Caco-2 (cell line): ENCODE measurements at regions of chr12 and their contacts with region 1.

Region 1: DNA sequence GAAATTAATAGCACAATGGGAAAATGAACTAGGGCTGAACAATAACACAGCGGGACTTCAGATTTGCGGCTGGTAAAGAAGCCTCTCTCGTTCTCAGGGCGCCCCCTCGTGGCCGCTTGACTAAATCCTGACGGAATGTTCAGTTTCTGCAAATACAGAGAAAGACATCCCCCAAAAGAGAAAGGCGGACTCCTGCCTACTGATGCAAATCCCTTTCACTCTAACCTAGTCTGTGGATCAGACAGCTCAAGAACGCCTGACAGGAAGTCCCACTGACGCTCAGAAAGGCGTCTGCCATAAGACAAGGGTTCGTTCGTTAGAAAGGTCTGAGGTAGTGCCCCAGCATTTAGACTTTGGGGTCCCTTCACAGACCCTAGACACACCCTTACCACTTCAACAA is 2.5 kb downstream of the NUAK1 start:
- DNase-seq: peak; percentile 77 to 85
- H3K4me3 ChIP-seq: no peak overlapping the region
- H3K4me3 Mint-ChIP-seq: peak overlapping the region; percentile 56
- H3K27ac Mint-ChIP-seq: no peak overlapping the region
- H3K4me1 ChIP-seq: peaks cover 42% of the 10 kb centered on the region
- H3K4me1 Mint-ChIP-seq: peaks cover 64% of the 10 kb centered on the region
- H3K27me3 ChIP-seq: no peaks in the 10 kb centered on the region; the same call in 1 of the 2 replicates
- H3K27me3 Mint-ChIP-seq: peaks cover 2% of the 10 kb centered on the region
- CTCF ChIP-seq: peak; percentile 78 to 85

Region 2: DNA sequence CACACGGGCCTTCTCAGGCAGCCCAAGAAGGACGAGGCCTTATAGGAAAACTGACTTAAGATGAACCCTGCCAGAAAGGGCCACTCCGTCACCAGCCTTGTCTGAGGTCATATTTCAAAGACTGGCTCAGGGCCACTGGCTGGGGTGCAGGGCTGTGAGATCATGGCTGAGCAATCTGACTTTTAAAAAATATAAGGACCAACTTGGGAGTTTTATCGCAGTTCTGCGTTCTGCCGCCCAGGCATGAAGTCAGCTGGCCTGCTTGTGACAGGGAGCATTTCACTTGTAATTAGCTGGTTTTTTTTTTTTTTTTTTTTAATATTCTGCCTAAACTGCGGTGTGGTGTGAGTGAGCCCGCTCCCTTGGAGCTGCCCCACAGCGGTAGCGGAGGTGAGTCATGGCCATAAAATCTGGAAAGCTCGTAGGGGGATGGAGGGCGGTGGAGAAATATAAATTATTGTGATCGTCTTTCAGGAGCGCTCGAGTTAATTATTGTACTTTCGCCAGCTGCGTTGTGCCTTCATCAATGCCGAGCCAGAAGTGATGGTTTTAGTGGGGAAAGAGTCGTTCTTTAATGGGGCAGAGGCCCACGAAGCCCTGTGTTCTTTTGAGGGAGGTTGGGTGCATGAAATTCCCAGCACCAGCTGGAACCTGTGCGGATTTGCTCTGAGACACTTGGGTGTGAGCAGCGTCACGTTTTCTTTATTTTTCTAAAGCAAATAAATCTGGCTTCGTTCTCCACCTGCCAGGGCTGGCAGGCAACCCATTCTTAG is 573.9 kb before region 1 on chr12:
- CTCF ChIA-PET with region 1: no interaction called
- POLR2A ChIA-PET with region 1: no interaction called
- intact Hi-C with region 1: loop called (anchors 1 kb)
- DNase-seq: peak; percentile 19 to 42
- H3K4me3 ChIP-seq: peak overlapping the region; percentile 24
- H3K4me3 Mint-ChIP-seq: peak overlapping the region; percentile 70
- H3K27ac Mint-ChIP-seq: peak overlapping the region; percentile 75
- H3K4me1 ChIP-seq: 0 out of 2 replicates have a peak, but pooled peaks cover 3% of the 10 kb centered on the region
- H3K4me1 Mint-ChIP-seq: peaks cover 10% of the 10 kb centered on the region
- H3K27me3 ChIP-seq: no peaks in the 10 kb centered on the region
- H3K27me3 Mint-ChIP-seq: no peaks in the 10 kb centered on the region
- CTCF ChIP-seq: no peak

Region 3: GRCh38 chr12:105713606-105714305 is 422.5 kb before region 1 on chr12:
- CTCF ChIA-PET with region 1: no interaction called
- POLR2A ChIA-PET with region 1: no interaction called
- intact Hi-C with region 1: no loop called
- DNase-seq: no peak
- H3K4me3 ChIP-seq: no peak overlapping the region
- H3K4me3 Mint-ChIP-seq: no peak overlapping the region
- H3K27ac Mint-ChIP-seq: no peak overlapping the region
- H3K4me1 ChIP-seq: no peaks in the 10 kb centered on the region
- H3K4me1 Mint-ChIP-seq: no peaks in the 10 kb centered on the region
- H3K27me3 ChIP-seq: no peaks in the 10 kb centered on the region
- H3K27me3 Mint-ChIP-seq: peaks cover 2% of the 10 kb centered on the region
- CTCF ChIP-seq: no peak

Region 4: DNA sequence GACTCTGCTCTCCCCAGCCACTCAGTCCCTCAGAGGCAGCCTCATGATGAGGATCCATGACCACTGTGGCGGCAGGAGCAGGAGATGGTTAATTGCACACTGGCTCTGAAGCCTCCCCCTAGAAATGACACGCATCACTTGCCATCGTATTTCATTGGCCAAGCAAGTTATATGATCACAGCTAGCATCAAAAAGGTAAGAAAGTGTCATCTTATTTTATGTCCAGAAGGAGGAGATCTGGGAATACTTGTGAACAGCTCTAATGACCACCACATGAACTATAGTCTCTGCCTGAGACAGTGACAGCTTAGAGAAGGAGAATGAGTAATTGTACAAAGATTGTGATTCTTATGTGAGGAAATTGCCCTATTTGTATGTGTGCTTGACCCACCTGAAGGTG is 360.9 kb before region 1 on chr12:
- CTCF ChIA-PET with region 1: interaction called, 3 read pairs
- POLR2A ChIA-PET with region 1: no interaction called
- intact Hi-C with region 1: loop called (anchors 2 kb)
- DNase-seq: no peak
- H3K4me3 ChIP-seq: no peak overlapping the region
- H3K4me3 Mint-ChIP-seq: no peak overlapping the region
- H3K27ac Mint-ChIP-seq: no peak overlapping the region
- H3K4me1 ChIP-seq: no peaks in the 10 kb centered on the region
- H3K4me1 Mint-ChIP-seq: no peaks in the 10 kb centered on the region
- H3K27me3 ChIP-seq: no peaks in the 10 kb centered on the region
- H3K27me3 Mint-ChIP-seq: no peaks in the 10 kb centered on the region
- CTCF ChIP-seq: no peak

Region 5: DNA sequence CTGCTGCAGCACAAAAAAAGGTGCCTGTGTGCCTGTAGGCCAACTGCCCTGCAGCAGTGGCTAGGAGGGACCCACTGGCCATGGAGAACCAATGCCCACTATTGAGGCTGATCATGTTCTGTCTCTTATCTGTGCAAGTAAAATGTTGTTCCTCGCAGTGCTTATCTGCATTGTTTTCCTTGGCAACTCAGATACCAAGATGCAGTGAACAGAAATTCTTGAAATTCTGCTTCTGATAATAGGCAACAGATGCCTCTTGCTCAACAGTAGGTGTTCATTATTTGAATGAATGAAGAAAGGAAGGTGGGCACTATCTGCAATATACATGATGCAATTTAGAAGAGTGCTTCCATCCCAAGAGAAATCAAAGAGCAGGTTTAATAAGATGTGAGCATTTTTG is 229.7 kb before region 1 on chr12:
- CTCF ChIA-PET with region 1: interaction called, 12 read pairs
- POLR2A ChIA-PET with region 1: no interaction called
- intact Hi-C with region 1: no loop called
- DNase-seq: peak in 1 of 2 experiments; percentile 38
- H3K4me3 ChIP-seq: no peak overlapping the region
- H3K4me3 Mint-ChIP-seq: no peak overlapping the region
- H3K27ac Mint-ChIP-seq: peak overlapping the region; percentile 2
- H3K4me1 ChIP-seq: peaks cover 14% of the 10 kb centered on the region
- H3K4me1 Mint-ChIP-seq: peaks cover 15% of the 10 kb centered on the region
- H3K27me3 ChIP-seq: no peaks in the 10 kb centered on the region
- H3K27me3 Mint-ChIP-seq: no peaks in the 10 kb centered on the region
- CTCF ChIP-seq: no peak

Region 6: DNA sequence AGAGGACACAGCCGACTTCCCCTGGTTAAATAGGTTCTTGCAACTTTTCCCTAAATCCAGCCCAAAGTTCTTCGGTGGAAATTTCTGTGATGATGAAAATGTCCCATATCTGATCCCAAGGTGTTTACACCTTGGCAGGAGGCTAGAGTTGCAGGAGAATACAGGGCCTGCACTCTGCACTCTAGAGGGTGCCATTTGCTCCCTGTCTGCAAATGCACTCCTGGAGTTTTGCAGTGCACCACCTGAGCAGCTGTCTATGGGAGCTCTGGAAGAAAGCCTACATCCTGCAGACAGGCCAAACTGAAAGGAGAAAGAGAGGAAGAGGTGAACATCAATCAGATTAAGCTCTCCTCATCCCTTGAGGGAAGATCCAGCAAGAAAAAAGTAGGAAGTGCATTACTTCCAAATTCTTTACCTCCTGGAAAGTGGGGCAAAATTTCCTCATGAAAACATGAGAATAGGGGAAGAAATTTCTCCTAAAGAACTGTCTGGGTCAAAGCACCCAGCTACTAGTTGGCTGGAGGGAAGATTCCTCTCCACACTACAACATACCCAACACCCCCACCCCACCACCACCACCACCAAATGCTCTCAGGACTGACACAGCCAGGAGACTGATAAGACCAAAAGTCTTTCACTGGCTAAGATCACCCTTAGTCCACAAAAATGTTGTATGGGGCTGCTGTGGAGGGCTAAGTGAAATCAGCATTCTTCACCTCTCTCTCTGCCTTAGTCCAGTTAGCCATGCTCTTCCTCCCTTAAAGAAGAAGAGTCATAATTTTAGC is 103.9 kb before region 1 on chr12:
- CTCF ChIA-PET with region 1: interaction called, 4 read pairs
- POLR2A ChIA-PET with region 1: no interaction called
- intact Hi-C with region 1: loop called (anchors 1 kb)
- DNase-seq: peak; percentile 23 to 49
- H3K4me3 ChIP-seq: no peak overlapping the region
- H3K4me3 Mint-ChIP-seq: no peak overlapping the region
- H3K27ac Mint-ChIP-seq: no peak overlapping the region
- H3K4me1 ChIP-seq: peaks cover 28% of the 10 kb centered on the region
- H3K4me1 Mint-ChIP-seq: peaks cover 25% of the 10 kb centered on the region
- H3K27me3 ChIP-seq: no peaks in the 10 kb centered on the region
- H3K27me3 Mint-ChIP-seq: no peaks in the 10 kb centered on the region
- CTCF ChIP-seq: peak in 1 of 2 experiments; percentile 50

Region 7: GRCh38 chr12:106108185-106108835 is 28.0 kb before region 1 on chr12:
- CTCF ChIA-PET with region 1: interaction called, 3 read pairs
- POLR2A ChIA-PET with region 1: interaction called, 3 read pairs
- intact Hi-C with region 1: loop called (anchors 2 kb)
- DNase-seq: no peak
- H3K4me3 ChIP-seq: no peak overlapping the region
- H3K4me3 Mint-ChIP-seq: no peak overlapping the region
- H3K27ac Mint-ChIP-seq: peak overlapping the region; percentile 51
- H3K4me1 ChIP-seq: peaks cover 49% of the 10 kb centered on the region
- H3K4me1 Mint-ChIP-seq: peaks cover 33% of the 10 kb centered on the region
- H3K27me3 ChIP-seq: no peaks in the 10 kb centered on the region
- H3K27me3 Mint-ChIP-seq: no peaks in the 10 kb centered on the region
- CTCF ChIP-seq: no peak

Region 8: GRCh38 chr12:107122452-107122958 is 986.2 kb after region 1 on chr12:
- CTCF ChIA-PET with region 1: no interaction called
- POLR2A ChIA-PET with region 1: no interaction called
- intact Hi-C with region 1: no loop called
- DNase-seq: no peak
- H3K4me3 ChIP-seq: no peak overlapping the region
- H3K4me3 Mint-ChIP-seq: no peak overlapping the region
- H3K27ac Mint-ChIP-seq: no peak overlapping the region
- H3K4me1 ChIP-seq: no peaks in the 10 kb centered on the region
- H3K4me1 Mint-ChIP-seq: peaks cover 9% of the 10 kb centered on the region
- H3K27me3 ChIP-seq: no peaks in the 10 kb centered on the region; the same call in 1 of the 2 replicates
- H3K27me3 Mint-ChIP-seq: peaks cover 25% of the 10 kb centered on the region
- CTCF ChIP-seq: no peak